A549 (cell line): ENCODE measurements at regions of chr14 and their contacts with region 1.

Region 1: DNA sequence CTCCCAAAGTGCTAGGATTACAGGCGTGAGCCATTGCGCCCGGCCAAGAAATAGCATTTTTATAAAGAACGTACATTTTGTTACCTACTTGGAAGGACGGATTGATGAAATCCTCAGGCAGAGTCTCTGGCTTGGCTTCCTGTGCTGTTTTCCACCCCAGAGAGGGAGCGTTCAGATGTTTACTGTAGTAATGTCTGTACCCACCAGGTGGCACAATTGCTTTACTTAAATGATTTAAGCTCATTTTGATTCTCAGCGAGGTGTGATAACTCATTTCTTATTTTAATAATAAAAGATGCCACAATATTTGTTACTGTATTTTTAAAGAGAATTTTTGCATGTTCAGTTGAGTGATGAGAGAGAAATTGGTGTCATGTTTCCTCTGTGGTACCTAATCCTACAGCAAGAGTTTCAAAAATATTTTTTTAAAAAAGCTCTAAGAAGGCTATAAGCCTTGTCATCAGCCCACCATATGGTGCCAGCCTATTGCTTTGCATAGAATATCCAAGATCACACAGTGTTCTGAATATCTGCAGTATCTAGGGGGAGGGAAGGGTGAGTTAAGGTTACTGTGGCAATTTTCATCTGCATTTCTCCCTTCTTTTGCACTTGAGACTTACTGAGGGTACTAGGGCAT is 82.6 kb upstream of the TRAF3 start:
- DNase-seq: peak; percentile 73 to 82
- ATAC-seq: peak; percentile 72 to 78
- H3K4me3 ChIP-seq: no peak overlapping the region
- H3K27ac ChIP-seq: no peak overlapping the region; a peak in 1 of 6 replicates
- H3K4me1 ChIP-seq: peaks cover 51% of the 10 kb centered on the region
- CTCF ChIP-seq: peak; percentile 79
- EP300 ChIP-seq: no peak
- POLR2A ChIP-seq: no peak
- RAD21 ChIP-seq: peak; percentile 75 to 79

Region 2: GRCh38 chr14:102375119-102375518 is 319.5 kb before region 1 on chr14:
- CTCF ChIA-PET with region 1: no interaction called
- POLR2A ChIA-PET with region 1: no interaction called
- DNase-seq: no peak
- ATAC-seq: no peak
- H3K4me3 ChIP-seq: no peak overlapping the region
- H3K27ac ChIP-seq: no peak overlapping the region
- H3K4me1 ChIP-seq: no peaks in the 10 kb centered on the region
- CTCF ChIP-seq: no peak
- EP300 ChIP-seq: no peak
- POLR2A ChIP-seq: no peak
- RAD21 ChIP-seq: no peak

Region 3: GRCh38 chr14:102474934-102475333 is 219.7 kb before region 1 on chr14:
- CTCF ChIA-PET with region 1: no interaction called
- POLR2A ChIA-PET with region 1: no interaction called
- DNase-seq: no peak
- ATAC-seq: no peak
- H3K4me3 ChIP-seq: no peak overlapping the region
- H3K27ac ChIP-seq: no peak overlapping the region
- H3K4me1 ChIP-seq: no peaks in the 10 kb centered on the region
- CTCF ChIP-seq: no peak
- EP300 ChIP-seq: no peak
- POLR2A ChIP-seq: no peak
- RAD21 ChIP-seq: no peak

Region 4: GRCh38 chr14:102524466-102525218 is 170.0 kb before region 1 on chr14:
- CTCF ChIA-PET with region 1: interaction called, 15 read pairs
- POLR2A ChIA-PET with region 1: no interaction called
- DNase-seq: peak; percentile 99
- ATAC-seq: peak; percentile 94 to 97
- H3K4me3 ChIP-seq: peak overlapping the region; percentile 51
- H3K27ac ChIP-seq: peak overlapping the region; percentile 85 to 88
- H3K4me1 ChIP-seq: peaks cover 32% of the 10 kb centered on the region
- CTCF ChIP-seq: peak; percentile 96
- EP300 ChIP-seq: no peak
- POLR2A ChIP-seq: peak; percentile 94
- RAD21 ChIP-seq: peak; percentile 85 to 89

Region 5: GRCh38 chr14:102616799-102617198 is 77.8 kb before region 1 on chr14:
- CTCF ChIA-PET with region 1: interaction called, 14 read pairs
- POLR2A ChIA-PET with region 1: no interaction called
- DNase-seq: peak in 1 of 2 experiments; percentile 14
- ATAC-seq: no peak; a peak in 1 of 6 replicates
- H3K4me3 ChIP-seq: no peak overlapping the region
- H3K27ac ChIP-seq: peak overlapping the region in 1 of 2 experiments; percentile 43; a peak in 1 of 6 replicates
- H3K4me1 ChIP-seq: peaks cover 14% of the 10 kb centered on the region
- CTCF ChIP-seq: no peak
- EP300 ChIP-seq: no peak
- POLR2A ChIP-seq: no peak
- RAD21 ChIP-seq: no peak

Region 6: GRCh38 chr14:102708494-102708893 is 13.8 kb after region 1 on chr14:
- CTCF ChIA-PET with region 1: interaction called, 34 read pairs
- POLR2A ChIA-PET with region 1: interaction called, 4 read pairs
- DNase-seq: no peak
- ATAC-seq: no peak
- H3K4me3 ChIP-seq: no peak overlapping the region
- H3K27ac ChIP-seq: no peak overlapping the region
- H3K4me1 ChIP-seq: peaks cover 8% of the 10 kb centered on the region; the same call in 2 of the 3 replicates
- CTCF ChIP-seq: no peak
- EP300 ChIP-seq: no peak
- POLR2A ChIP-seq: no peak
- RAD21 ChIP-seq: no peak

Region 7: DNA sequence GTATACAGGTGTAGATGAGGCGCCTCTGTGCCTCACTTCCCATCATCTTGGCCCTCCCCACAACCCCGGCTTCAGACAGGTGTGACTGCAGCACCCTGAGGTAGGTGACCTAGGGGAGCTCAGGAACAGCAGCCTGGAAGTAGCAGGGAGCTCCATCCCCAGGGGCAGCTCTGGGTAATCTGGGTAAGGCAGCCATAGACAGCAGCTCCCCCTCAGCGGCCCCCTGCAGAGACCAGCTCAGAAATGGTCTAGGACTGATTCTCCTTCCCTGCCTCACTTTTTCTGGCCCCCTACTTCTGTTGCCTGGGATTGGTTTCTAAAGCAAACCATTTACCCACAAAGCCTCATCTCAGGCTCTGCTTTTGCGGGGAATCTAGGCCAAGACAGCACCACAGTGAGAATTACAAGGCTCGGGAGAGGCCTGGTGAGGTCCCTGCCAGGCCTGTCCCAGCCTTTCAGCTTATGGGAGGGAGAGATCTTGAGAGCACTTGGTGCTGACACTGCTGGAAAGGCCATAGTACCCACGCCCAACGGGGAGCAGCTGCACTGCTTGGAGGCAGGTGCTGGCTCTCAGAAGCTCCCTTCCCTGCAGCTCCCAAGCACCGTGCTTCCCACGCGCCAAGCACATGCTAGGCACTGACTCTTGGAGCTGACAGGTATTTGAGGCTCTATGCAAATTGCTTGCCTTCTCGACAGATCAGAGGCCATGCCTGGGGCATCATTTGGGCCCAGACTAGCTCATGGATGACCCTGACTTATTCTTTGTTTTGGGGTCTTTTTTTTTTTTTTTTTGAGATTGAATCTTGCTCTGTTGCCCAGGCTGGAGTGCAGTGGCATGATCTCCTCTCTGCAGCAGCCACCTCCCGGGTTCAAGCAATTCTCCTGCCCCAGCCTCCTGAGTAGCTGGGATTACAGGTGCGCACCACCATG is 37.5 kb after region 1 on chr14:
- CTCF ChIA-PET with region 1: interaction called, 14 read pairs
- POLR2A ChIA-PET with region 1: no interaction called
- DNase-seq: no peak
- ATAC-seq: peak in 1 of 2 experiments; percentile 33; a peak in 4 of 6 replicates
- H3K4me3 ChIP-seq: no peak overlapping the region
- H3K27ac ChIP-seq: no peak overlapping the region
- H3K4me1 ChIP-seq: no peaks in the 10 kb centered on the region
- CTCF ChIP-seq: no peak
- EP300 ChIP-seq: no peak
- POLR2A ChIP-seq: no peak
- RAD21 ChIP-seq: no peak

Region 8: DNA sequence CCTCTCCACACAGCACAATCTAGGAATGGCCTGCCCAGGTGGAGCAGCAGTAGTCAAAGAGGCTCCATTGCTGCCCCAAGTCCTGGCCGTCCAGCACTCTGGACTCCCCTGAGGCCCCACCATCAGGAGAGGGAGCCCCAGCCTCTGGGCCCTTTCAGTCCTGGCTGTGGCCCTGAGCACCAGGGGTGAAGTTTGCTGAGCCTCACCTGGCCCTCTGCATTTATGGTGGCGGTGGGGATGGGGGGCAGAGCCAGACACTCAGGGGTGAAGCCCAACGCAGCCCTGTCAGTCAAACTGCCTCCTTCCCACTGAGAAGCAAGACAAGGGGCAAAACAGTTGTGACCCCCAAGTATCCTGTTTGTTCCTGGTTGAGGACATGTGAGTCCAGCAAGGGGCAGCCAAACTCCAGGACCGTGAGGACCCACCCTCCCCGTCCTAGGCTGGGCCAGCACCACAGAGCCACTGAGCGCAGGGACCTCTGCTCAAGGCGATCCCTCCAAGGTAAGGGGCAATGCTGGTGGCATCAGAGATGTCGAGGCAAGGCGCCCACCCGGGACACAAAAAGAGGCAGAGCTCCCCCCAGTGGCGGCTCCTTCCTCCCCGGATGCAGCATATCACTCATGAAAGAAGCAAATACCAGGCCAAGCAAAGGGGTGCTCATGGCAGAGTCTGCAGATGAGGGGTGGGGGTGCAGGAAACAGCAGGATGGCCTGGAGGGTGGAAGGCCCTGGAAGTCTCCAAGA is 223.0 kb after region 1 on chr14:
- CTCF ChIA-PET with region 1: interaction called, 12 read pairs
- POLR2A ChIA-PET with region 1: no interaction called
- DNase-seq: peak; percentile 39 to 52
- ATAC-seq: peak; percentile 6 to 47; a peak in 3 of 6 replicates
- H3K4me3 ChIP-seq: no peak overlapping the region
- H3K27ac ChIP-seq: no peak overlapping the region
- H3K4me1 ChIP-seq: peaks cover 2% of the 10 kb centered on the region; the same call in 1 of the 3 replicates
- CTCF ChIP-seq: peak; percentile 46
- EP300 ChIP-seq: no peak
- POLR2A ChIP-seq: no peak
- RAD21 ChIP-seq: peak; percentile 61 to 66

Region 9: GRCh38 chr14:103023881-103024473 is 329.3 kb after region 1 on chr14:
- CTCF ChIA-PET with region 1: no interaction called
- POLR2A ChIA-PET with region 1: no interaction called
- DNase-seq: no peak
- ATAC-seq: no peak; a peak in 2 of 6 replicates
- H3K4me3 ChIP-seq: no peak overlapping the region
- H3K27ac ChIP-seq: peak overlapping the region in 1 of 2 experiments; percentile 15; a peak in 1 of 6 replicates
- H3K4me1 ChIP-seq: peaks cover 25% of the 10 kb centered on the region
- CTCF ChIP-seq: no peak
- EP300 ChIP-seq: no peak
- POLR2A ChIP-seq: no peak
- RAD21 ChIP-seq: no peak